ENCODE measurements at regions of chr22 and their contacts with region 1.

Region 1: DNA sequence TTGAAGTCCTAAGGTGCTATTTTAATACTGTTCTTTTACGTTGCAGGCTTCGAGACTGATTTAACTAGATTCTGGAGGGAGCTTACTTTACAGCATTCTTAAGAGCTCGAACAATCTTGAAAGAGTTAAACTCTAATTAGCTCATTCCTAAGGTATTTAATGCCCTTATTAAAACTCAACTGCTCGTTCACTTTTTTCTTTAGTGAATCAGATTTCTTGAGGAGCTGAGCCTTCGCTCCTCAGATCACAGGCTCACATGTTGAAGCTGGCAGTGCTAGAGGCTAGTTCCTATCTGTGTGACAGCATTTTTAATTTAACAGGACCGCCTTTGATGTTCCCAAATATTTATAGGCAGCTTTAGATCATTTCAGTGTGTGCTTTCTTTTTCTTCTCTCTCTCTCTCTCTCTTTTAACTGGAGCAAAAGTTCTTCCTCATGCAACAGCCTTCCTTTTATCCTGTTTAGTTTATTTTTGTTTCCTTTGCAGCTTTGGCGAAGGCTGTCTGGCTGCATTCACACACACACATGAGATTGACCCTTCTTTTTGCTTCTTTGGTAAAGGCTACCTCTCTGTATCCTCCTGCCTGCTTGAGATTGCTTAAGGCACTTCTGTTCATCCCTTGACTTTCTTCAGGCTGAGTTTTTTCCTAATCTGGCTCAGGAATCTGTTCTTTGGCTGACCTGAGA is 21.0 kb downstream of the ZNRF3 start:
- DNase-seq: peak; percentile 66
- ATAC-seq: peak; percentile 76
- H3K4me3 ChIP-seq: no peak overlapping the region
- H3K27ac ChIP-seq: peak overlapping the region; percentile 65; the same call in 1 of the 2 replicates
- H3K4me1 ChIP-seq: peaks cover 17% of the 10 kb centered on the region
- H3K27me3 ChIP-seq: no peaks in the 10 kb centered on the region
- CTCF ChIP-seq: no peak
- POLR2A ChIP-seq: no peak
- RAD21 ChIP-seq: no peak

Region 2: DNA sequence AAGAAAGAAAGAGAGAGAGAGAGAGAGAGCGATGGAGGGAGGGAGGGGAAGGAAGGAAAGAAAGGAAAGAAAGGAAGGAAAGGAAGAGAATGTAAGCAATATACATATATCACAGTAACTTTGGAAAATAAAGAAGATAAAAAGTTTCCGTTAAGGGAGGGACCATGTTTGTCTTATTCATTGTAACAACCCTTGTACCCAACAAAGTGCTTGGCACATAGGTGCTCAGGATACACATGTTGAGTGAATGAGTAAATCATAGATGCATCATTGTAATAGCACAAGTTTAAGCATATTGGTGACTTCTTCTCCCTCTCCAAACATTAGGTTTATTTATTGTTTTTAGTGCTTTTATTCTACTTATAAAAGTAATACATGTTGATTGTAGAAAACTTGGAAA is 60.7 kb before region 1 on chr22:
- CTCF ChIA-PET with region 1: no interaction called
- POLR2A ChIA-PET with region 1: no interaction called
- dilution Hi-C with region 1: no loop called
- in situ Hi-C with region 1: no loop called
- intact Hi-C with region 1: loop called (anchors 2 kb)
- DNase-seq: no peak
- ATAC-seq: no peak
- H3K4me3 ChIP-seq: no peak overlapping the region
- H3K27ac ChIP-seq: no peak overlapping the region
- H3K4me1 ChIP-seq: no peaks in the 10 kb centered on the region
- H3K27me3 ChIP-seq: no peaks in the 10 kb centered on the region
- CTCF ChIP-seq: no peak
- POLR2A ChIP-seq: no peak
- RAD21 ChIP-seq: no peak

Region 3: GRCh38 chr22:29031227-29032011 is 127.1 kb after region 1 on chr22:
- CTCF ChIA-PET with region 1: no interaction called
- POLR2A ChIA-PET with region 1: no interaction called
- dilution Hi-C with region 1: no loop called
- in situ Hi-C with region 1: no loop called
- intact Hi-C with region 1: loop called (anchors 5 kb)
- DNase-seq: peak; percentile 98
- ATAC-seq: peak; percentile 83
- H3K4me3 ChIP-seq: peak overlapping the region; percentile 10; the same call in 1 of the 2 replicates
- H3K27ac ChIP-seq: peak overlapping the region; percentile 87
- H3K4me1 ChIP-seq: peaks cover 18% of the 10 kb centered on the region
- H3K27me3 ChIP-seq: no peaks in the 10 kb centered on the region
- CTCF ChIP-seq: peak; percentile 13; the same call in 1 of the 2 replicates
- POLR2A ChIP-seq: peak; percentile 74; the same call in 1 of the 2 replicates
- RAD21 ChIP-seq: peak; percentile 26; the same call in 1 of the 2 replicates

Measured in IMR-90 (cell line).